ENCODE measurements at regions of chr1 and their contacts with region 1.

Region 1: GRCh38 chr1:157992031-157992832 is 1.2 kb upstream of the KIRREL1 start:
- DNase-seq: peak in 8 of 10 donors; percentile 6 to 71 (median 56)
- H3K4me3 ChIP-seq: no peak overlapping the region
- H3K27ac ChIP-seq: peak overlapping the region in 4 of 59 donors; percentile 24 to 35 (median 30)
- H3K27me3 ChIP-seq: peaks cover 0 to 50% (median 13%) of the 10 kb centered on the region in 45 donors
- CTCF ChIP-seq: peak; percentile 52 to 93 (median 84)

Region 2: GRCh38 chr1:158035976-158036583 is 43.8 kb after region 1 on chr1:
- intact Hi-C with region 1: loop called in 1 of 2 experiments (anchors 5 kb)
- DNase-seq: no peak
- H3K4me3 ChIP-seq: no peak overlapping the region
- H3K27ac ChIP-seq: no peak overlapping the region
- H3K27me3 ChIP-seq: peaks cover 0 to 13% (median 0%) of the 10 kb centered on the region in 45 donors
- CTCF ChIP-seq: peak in 54 of 56 donors; percentile 42 to 78 (median 64)

Region 3: GRCh38 chr1:158087320-158087927 is 95.2 kb after region 1 on chr1:
- intact Hi-C with region 1: loop called (anchors 2 to 10 kb)
- DNase-seq: peak in 3 of 10 donors; percentile 22 to 40 (median 24)
- H3K4me3 ChIP-seq: no peak overlapping the region
- H3K27ac ChIP-seq: no peak overlapping the region
- H3K27me3 ChIP-seq: peaks cover 0 to 7% (median 0%) of the 10 kb centered on the region in 45 donors
- CTCF ChIP-seq: peak; percentile 37 to 85 (median 74)

Region 4: DNA sequence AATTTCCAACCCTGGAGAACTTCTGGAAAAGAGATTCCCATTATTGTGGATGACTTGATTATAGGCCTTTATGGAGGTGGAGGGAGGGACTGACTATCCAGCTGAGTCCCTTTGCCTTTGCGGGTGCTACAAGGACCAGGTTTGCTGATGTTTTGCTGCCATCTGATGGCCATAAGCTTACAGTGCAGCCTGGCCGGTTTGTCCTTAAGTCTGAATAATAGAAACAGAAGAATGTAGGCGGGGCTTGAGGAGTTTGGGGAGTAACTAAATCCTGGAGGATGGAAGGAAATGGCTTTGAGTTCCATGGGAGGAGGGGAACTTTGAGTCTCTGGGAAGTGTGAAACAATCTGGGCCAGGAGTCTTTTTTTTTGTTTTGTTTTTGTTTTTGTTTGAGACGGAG is 132.8 kb after region 1 on chr1:
- intact Hi-C with region 1: loop called (anchors 5 to 10 kb)
- DNase-seq: peak; percentile 41 to 94 (median 82)
- H3K4me3 ChIP-seq: no peak overlapping the region
- H3K27ac ChIP-seq: no peak overlapping the region
- H3K27me3 ChIP-seq: peaks cover 0 to 11% (median 0%) of the 10 kb centered on the region in 45 donors
- CTCF ChIP-seq: peak; percentile 40 to 98 (median 93)